Activated T-helper 1 cell treated with anti-CD3 and anti-CD28 coated beads, Interleukin-12 subunit alpha, Interleukin-12 subunit beta, Interleukin-2, Interleukin-4 antibody, amounts not matched to agents 30 ng/mL and 10 ng/mL and 1 ng/mL, durations not matched to agents 14 hours and 24 hours and 36 hours (primary cell): ENCODE measurements at regions of chr1 and their contacts with region 1.

Region 1: DNA sequence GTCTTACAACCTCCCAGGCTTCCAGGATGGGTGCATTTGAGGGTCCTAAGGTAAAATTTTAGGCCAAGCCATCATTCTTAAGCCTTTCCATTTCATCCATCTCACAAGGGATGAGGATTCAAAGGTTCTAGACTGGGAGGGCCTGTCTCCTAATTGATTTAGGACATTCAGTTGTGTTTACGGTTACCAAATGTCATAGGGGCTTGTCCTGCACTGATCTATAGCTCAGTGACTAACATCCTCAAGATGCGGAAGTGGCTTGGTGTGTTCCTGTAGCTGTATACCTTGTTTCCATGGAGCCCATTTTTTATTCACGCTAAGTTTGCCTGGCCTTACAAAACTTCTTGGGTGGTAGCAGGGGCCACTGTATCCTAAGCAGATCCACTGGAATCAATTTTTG is 52.8 kb downstream of the DUSP10 start:
- DNase-seq: no peak
- H3K4me3 Mint-ChIP-seq: no peak overlapping the region
- H3K27ac Mint-ChIP-seq: no peak overlapping the region
- H3K4me1 Mint-ChIP-seq: peaks cover 30% of the 10 kb centered on the region
- H3K27me3 Mint-ChIP-seq: peaks cover 1% of the 10 kb centered on the region

Region 2: DNA sequence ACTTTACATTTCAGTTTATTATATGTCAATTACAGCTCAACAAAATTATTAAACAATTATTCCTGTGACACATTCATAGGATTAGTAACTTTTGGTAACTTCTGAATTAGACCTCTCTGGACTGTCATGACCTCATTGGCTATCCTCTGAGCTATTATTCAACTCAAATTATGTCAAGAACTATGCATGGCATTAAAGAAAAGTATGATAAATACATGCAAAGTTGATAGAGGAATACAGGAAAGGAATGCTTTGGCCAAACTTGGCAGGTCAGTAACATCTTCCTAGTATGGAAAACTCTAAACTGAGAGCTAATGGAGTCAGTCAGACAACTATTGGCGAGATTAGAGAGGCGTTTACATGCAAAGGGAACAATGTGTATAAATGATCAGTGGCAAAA is 105.7 kb before region 1 on chr1:
- intact Hi-C with region 1: no loop called
- DNase-seq: no peak
- H3K4me3 Mint-ChIP-seq: no peak overlapping the region
- H3K27ac Mint-ChIP-seq: no peak overlapping the region
- H3K4me1 Mint-ChIP-seq: no peaks in the 10 kb centered on the region
- H3K27me3 Mint-ChIP-seq: peaks cover 15% of the 10 kb centered on the region

Region 3: DNA sequence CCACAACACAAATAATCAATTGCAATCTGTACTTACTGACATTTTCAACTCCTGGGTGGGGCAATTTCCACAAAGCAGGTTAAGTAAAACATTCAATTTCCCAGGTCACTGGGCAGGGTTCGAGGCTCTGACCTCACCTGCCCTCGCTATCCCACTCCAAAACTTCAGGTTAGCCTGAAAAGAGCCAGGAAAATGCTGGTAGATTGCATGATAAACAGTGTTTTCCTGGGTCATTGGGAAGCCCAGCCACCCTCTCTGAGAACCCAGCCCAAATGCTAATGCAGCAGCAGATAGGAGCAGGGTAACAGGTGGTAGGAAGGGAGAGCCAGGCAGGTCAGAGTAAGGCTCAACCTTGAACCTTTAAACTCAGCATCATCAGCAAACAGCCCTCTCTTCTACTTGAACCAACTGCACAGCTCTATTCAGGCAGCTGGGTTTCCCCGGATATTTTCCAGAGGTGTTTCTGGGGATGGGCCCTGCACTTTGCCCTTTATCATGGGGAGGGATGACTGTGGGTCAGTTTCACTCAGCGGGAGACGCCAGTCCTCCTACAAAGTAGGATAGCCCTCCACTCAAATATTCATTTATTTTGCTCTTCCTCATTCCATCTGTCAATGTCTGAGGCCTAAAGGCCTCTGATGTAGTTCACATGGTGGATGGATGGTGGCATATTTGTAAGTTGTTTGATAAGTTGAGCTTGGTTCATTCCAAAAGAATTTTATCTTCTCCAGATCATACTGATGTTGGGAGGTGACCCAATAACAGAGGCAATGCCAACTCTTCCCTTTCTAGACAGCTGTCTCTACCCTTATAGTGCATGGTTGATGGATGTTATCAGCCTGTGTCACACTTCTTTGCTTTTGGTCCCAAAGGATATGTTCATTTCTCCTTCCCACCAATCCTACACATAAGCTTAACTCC is 13.0 kb before region 1 on chr1:
- intact Hi-C with region 1: loop called (anchors 2 kb)
- DNase-seq: no peak
- H3K4me3 Mint-ChIP-seq: no peak overlapping the region
- H3K27ac Mint-ChIP-seq: no peak overlapping the region
- H3K4me1 Mint-ChIP-seq: no peaks in the 10 kb centered on the region
- H3K27me3 Mint-ChIP-seq: peaks cover 6% of the 10 kb centered on the region